ENCODE measurements at regions of chr15 and their contacts with region 1.

Region 1: DNA sequence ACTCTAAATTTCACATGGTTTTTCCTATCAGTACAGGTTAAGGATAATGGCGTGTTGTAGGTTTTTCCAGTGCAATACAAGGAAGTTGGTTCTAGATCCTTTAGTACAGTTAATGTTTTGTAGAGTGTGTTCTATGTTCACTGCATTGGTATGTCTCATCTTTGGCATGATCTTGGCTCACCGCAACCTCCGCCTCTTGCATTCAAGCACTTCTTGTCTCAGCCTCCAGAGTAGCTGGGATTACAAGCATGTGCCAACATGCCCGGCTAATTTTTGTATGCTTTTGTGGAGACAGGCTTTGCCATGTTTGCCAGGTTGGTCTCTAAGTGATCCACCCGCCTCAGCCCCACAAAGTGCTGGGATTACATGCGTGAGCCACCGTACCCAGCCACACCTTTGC is 30.4 kb downstream of the SNRPN start:
- DNase-seq: no peak
- ATAC-seq: no peak
- H3K4me3 ChIP-seq: no peak overlapping the region
- H3K4me3 Mint-ChIP-seq: no peak overlapping the region
- H3K27ac ChIP-seq: no peak overlapping the region
- H3K27ac Mint-ChIP-seq: no peak overlapping the region
- H3K4me1 ChIP-seq: no peaks in the 10 kb centered on the region
- H3K4me1 Mint-ChIP-seq: no peaks in the 10 kb centered on the region
- H3K27me3 ChIP-seq: no peaks in the 10 kb centered on the region
- H3K27me3 Mint-ChIP-seq: no peaks in the 10 kb centered on the region
- CTCF ChIP-seq: no peak

Region 2: DNA sequence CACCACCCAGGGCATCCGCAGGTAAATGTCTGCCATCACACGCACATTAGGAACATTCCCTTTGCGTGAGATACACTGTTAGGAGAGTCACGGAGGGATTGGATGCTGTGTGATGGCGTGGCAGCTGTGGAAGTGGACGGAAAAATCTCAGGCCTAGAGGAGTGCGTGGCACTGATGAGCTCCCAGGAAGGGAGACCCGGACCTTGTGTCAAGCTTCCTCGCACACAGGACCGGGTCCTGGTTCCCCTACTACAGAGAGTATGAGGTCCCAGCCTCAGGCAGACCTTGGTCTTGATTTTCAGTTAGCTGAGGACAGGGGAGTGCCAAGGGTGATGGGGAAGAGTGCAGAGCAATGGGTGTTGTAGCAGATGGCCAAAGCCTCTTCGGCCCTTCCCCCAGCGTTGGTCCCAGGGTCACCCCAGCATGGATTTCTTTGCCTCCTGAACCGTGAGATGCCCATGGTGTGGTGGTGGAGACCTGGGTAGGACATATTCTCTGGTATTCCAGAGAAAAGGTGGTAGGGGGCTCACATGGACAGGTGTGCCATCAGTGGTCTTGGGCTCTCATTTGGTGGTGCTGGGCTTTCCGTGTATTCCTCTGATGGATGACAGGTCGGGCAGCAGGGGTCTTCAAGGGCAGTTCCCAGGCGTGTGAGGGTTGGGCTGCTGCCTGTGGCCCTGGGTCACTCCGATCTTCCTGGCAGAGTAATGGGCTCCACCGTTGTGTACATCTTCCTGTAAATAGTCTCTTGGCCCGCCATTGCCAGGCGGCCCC is 74.7 kb after region 1 on chr15:
- CTCF ChIA-PET with region 1: no interaction called
- POLR2A ChIA-PET with region 1: no interaction called
- intact Hi-C with region 1: loop called in 1 of 2 experiments (anchors 5 kb)
- DNase-seq: peak in 1 of 14 experiments; percentile 10
- ATAC-seq: no peak
- H3K4me3 ChIP-seq: no peak overlapping the region
- H3K4me3 Mint-ChIP-seq: no peak overlapping the region
- H3K27ac ChIP-seq: no peak overlapping the region
- H3K27ac Mint-ChIP-seq: no peak overlapping the region
- H3K4me1 ChIP-seq: no peaks in the 10 kb centered on the region
- H3K4me1 Mint-ChIP-seq: no peaks in the 10 kb centered on the region
- H3K27me3 ChIP-seq: no peaks in the 10 kb centered on the region
- H3K27me3 Mint-ChIP-seq: no peaks in the 10 kb centered on the region
- CTCF ChIP-seq: no peak